HEK293T (cell line): ENCODE measurements at regions of chr11 and their contacts with region 1.

Region 1: DNA sequence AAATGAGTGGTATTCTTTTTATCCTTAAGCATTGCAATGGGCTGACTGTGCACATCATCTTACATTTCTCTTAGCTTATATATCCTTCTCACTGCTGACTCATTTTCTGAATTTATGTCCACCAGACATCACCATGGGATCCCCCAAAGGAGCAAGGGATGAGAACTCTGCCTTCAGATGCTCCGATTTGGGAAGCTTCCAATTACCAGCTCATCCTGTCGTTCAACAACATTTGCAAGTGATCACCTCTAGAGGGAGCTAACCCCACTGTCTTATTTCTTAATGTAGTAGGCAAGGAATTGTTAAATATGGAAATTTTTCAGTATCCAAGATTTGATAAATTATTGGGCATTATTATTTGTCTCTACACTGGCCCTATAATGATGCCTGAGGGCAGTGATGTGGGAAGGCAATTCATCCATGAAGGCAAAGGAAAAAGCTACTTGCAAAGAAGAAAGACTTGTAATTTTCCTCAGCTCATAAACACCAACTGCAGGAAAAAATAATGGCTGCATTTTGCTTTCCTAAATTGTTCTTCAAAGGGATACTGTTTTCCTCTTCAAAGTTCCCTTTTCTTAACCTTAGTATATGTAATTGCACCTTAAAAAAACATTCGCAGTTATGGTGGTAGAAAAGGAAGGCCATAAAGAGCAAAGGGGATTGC is 102.4 kb upstream of the FSHB start:
- DNase-seq: peak; percentile 33

Region 2: GRCh38 chr11:29956076-29956556 is 172.3 kb before region 1 on chr11:
- CTCF ChIA-PET with region 1: no interaction called
- POLR2A ChIA-PET with region 1: no interaction called
- DNase-seq: no peak

Region 3: GRCh38 chr11:30116512-30116911 is 11.9 kb before region 1 on chr11:
- CTCF ChIA-PET with region 1: interaction called, 14 read pairs
- POLR2A ChIA-PET with region 1: no interaction called
- DNase-seq: no peak

Region 4: GRCh38 chr11:30143098-30143705 is 14.8 kb after region 1 on chr11:
- CTCF ChIA-PET with region 1: interaction called, 25 read pairs
- POLR2A ChIA-PET with region 1: no interaction called
- DNase-seq: peak; percentile 44

Region 5: GRCh38 chr11:30196400-30197206 is 68.2 kb after region 1 on chr11:
- CTCF ChIA-PET with region 1: interaction called, 13 read pairs
- POLR2A ChIA-PET with region 1: no interaction called
- DNase-seq: peak; percentile 68

Region 6: GRCh38 chr11:30317030-30317429 is 188.6 kb after region 1 on chr11:
- CTCF ChIA-PET with region 1: no interaction called
- POLR2A ChIA-PET with region 1: no interaction called
- DNase-seq: no peak